Activated CD4-positive, alpha-beta T cell treated with anti-CD3 and anti-CD28 coated beads, Interleukin-2, amount 10 ng/mL, durations not matched to agents 7 days and 5 days (primary cell): ENCODE measurements at regions of chr17 and their contacts with region 1.

Region 1: GRCh38 chr17:2054512-2055291 is at the start of gene HIC1:
- DNase-seq: peak; percentile 78
- H3K4me3 Mint-ChIP-seq: peak within 1 kb of the TSS; percentile 69
- H3K27ac Mint-ChIP-seq: peak within 1 kb of the TSS; percentile 82
- H3K4me1 Mint-ChIP-seq: peaks cover 24% of the 10 kb centered on the region
- H3K27me3 Mint-ChIP-seq: peaks cover 14% of the 10 kb centered on the region
- total RNA-seq, gene HIC1: 29.0 to 31.0 TPM

Region 2: DNA sequence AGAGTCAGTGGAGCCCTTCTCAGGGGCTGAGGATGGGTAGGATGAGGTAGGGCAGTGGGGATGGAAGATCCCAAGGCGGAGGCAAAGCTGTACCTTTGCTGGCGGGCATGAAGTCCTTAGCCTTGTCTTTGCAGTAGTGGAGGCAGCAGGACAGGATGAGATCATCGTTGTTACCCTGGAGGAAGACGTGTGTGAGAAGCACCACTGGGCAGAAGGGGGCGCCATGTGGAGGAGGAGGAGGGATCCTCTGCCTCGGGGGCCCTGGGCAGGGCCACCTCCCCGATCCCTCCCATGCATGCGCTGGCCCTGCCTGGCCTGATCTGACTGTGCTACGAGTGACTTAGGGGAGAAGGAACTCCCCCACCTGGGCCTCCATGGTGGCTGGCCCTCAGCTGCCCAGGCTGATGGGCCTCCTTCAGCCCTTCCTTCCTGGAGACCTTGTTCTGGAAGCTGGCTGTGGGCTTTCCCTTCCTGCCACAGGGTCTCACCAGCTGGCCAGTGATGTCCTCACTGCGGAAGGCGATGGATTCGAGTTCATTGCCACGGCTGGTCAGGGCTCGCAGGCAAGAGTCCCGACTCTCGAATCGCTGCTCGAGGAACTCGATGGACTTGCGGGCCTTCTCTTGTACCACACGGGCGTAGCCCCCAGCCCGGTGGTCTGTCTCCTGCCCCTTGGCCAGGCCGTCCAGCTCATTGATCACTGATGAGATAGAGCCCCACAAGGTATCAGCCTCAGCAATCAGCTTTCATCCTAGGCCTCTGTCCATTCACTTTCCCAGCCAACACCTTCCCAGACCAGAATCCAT is 10.5 kb after region 1 on chr17:
- CTCF ChIA-PET with region 1: interaction called, 110 read pairs
- POLR2A ChIA-PET with region 1: no interaction called
- DNase-seq: peak; percentile 72
- H3K4me3 Mint-ChIP-seq: no peak overlapping the region
- H3K27ac Mint-ChIP-seq: peak overlapping the region; percentile 9
- H3K4me1 Mint-ChIP-seq: peaks cover 56% of the 10 kb centered on the region
- H3K27me3 Mint-ChIP-seq: no peaks in the 10 kb centered on the region

Region 3: DNA sequence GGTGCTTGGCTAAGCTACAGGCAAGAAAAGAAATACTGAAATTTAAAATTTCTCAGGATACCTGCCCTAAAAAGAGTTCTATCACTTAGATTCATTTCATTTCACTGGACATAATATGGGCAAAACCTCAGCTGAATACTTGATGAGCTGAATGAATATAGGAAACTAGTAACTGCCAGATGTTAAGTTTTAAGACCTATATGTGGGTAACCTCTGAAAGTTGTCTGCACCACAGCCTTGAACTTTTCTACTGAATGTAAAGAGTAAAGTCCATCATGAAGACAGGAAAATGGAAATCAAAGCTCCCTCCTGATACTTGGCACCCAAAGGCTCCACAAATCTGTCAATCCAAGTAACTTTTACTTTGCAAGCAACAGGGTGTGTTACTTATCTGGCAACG is 51.0 kb after region 1 on chr17:
- CTCF ChIA-PET with region 1: no interaction called
- POLR2A ChIA-PET with region 1: no interaction called
- DNase-seq: no peak
- H3K4me3 Mint-ChIP-seq: no peak overlapping the region
- H3K27ac Mint-ChIP-seq: no peak overlapping the region
- H3K4me1 Mint-ChIP-seq: peaks cover 46% of the 10 kb centered on the region
- H3K27me3 Mint-ChIP-seq: no peaks in the 10 kb centered on the region

Region 4: DNA sequence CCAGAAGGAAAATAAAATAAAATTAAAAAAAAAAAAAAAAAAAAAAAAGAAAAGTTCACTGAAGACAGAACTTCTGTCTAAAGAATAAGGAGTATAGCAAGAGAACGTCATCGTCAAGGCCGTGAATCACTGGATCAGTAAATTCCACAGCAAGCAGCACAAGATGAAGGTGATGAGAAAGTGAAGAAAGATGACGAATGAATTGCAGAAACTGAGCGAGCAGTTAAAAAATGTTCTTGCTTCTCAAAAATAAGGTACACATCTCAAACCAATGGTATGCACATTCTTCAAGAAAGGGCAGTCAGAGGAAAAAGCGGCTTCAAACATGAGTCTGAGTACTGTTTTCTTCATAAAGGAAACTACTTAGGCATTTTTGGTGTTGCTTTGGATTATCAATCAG is 144.2 kb after region 1 on chr17:
- CTCF ChIA-PET with region 1: no interaction called
- POLR2A ChIA-PET with region 1: no interaction called
- DNase-seq: no peak
- H3K4me3 Mint-ChIP-seq: no peak overlapping the region
- H3K27ac Mint-ChIP-seq: no peak overlapping the region
- H3K4me1 Mint-ChIP-seq: peaks cover 65% of the 10 kb centered on the region
- H3K27me3 Mint-ChIP-seq: no peaks in the 10 kb centered on the region

Region 5: GRCh38 chr17:2215616-2216364 is 161.1 kb after region 1 on chr17:
- CTCF ChIA-PET with region 1: interaction called, 11 read pairs
- POLR2A ChIA-PET with region 1: interaction called, 3 read pairs
- DNase-seq: peak; percentile 85
- H3K4me3 Mint-ChIP-seq: peak overlapping the region; percentile 73
- H3K27ac Mint-ChIP-seq: peak overlapping the region; percentile 96
- H3K4me1 Mint-ChIP-seq: peaks cover 63% of the 10 kb centered on the region
- H3K27me3 Mint-ChIP-seq: no peaks in the 10 kb centered on the region

Region 6: DNA sequence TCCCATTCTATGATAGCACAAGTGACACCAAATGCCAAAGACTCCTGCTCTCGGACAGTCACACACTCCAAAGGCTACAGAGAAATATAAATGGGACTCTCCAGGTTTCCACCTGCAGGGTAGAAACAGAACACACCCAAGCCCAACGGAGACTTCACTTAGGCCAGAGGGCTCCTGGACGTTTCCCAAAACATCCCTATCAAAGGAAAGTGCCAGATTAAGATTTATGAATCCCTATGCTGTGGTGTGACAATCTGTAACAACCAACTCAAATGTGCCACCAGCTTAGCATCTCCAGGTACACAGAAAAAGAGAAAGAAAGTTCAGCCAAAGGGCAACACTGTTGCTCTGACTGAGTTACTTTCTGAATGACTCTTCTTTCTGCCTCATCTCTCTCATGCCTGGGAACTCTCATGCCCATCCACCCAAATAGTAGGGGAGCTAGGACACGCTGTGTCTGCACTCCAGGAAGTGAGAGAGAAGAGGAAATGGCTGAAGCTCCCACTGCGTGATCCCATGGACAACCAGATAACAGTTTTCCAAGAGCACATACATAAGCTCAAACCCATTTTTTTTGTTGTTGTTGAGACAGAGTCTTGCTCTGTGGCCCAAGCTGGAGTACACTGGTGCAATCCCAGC is 199.2 kb after region 1 on chr17:
- CTCF ChIA-PET with region 1: interaction called, 71 read pairs
- POLR2A ChIA-PET with region 1: interaction called, 9 read pairs
- DNase-seq: peak; percentile 63
- H3K4me3 Mint-ChIP-seq: peak overlapping the region; percentile 26
- H3K27ac Mint-ChIP-seq: peak overlapping the region; percentile 91
- H3K4me1 Mint-ChIP-seq: peaks cover 82% of the 10 kb centered on the region
- H3K27me3 Mint-ChIP-seq: no peaks in the 10 kb centered on the region

Region 7: DNA sequence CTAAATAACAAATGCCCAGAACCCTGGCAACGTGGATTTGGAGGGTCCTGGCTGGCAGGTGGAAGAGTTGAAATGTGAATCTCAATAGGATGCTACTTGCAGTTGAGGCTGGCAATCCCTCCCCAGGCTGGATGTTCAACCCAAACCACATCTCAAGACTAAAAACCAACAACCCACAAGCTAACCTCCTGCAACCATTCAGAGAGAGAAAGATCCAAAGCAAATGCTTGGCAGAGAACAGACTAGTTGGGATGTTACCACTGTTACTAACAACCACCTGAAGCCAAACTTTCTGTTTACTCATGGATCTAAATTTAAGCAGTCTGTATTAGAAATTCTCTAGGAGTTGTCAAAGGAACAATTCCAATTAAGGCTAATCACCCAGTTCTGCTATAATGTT is 221.0 kb after region 1 on chr17:
- CTCF ChIA-PET with region 1: interaction called, 82 read pairs
- POLR2A ChIA-PET with region 1: no interaction called
- DNase-seq: peak; percentile 66
- H3K4me3 Mint-ChIP-seq: peak overlapping the region; percentile 40
- H3K27ac Mint-ChIP-seq: peak overlapping the region; percentile 81
- H3K4me1 Mint-ChIP-seq: peaks cover 70% of the 10 kb centered on the region
- H3K27me3 Mint-ChIP-seq: no peaks in the 10 kb centered on the region

Region 8: GRCh38 chr17:2336215-2336851 is 281.6 kb after region 1 on chr17 and contains the start of gene TSR1:
- CTCF ChIA-PET with region 1: interaction called, 22 read pairs
- POLR2A ChIA-PET with region 1: no interaction called
- DNase-seq: peak; percentile 91
- H3K4me3 Mint-ChIP-seq: peak within 1 kb of the TSS; percentile 93
- H3K27ac Mint-ChIP-seq: peak within 1 kb of the TSS; percentile 90
- H3K4me1 Mint-ChIP-seq: peaks cover 19% of the 10 kb centered on the region
- H3K27me3 Mint-ChIP-seq: no peaks in the 10 kb centered on the region
- total RNA-seq, gene TSR1: 27.2 to 27.4 TPM